IMR-90 (cell line): ENCODE measurements at regions of chr3 and their contacts with region 1.

Region 1: GRCh38 chr3:195259475-195260279 is 11.3 kb downstream of the XXYLT1 start:
- DNase-seq: peak; percentile 90
- ATAC-seq: peak; percentile 95
- H3K4me3 ChIP-seq: peak overlapping the region; percentile 58
- H3K27ac ChIP-seq: peak overlapping the region; percentile 87
- H3K4me1 ChIP-seq: peaks cover 16% of the 10 kb centered on the region
- H3K27me3 ChIP-seq: no peaks in the 10 kb centered on the region
- CTCF ChIP-seq: peak; percentile 94
- POLR2A ChIP-seq: peak; percentile 80
- RAD21 ChIP-seq: peak; percentile 85

Region 2: DNA sequence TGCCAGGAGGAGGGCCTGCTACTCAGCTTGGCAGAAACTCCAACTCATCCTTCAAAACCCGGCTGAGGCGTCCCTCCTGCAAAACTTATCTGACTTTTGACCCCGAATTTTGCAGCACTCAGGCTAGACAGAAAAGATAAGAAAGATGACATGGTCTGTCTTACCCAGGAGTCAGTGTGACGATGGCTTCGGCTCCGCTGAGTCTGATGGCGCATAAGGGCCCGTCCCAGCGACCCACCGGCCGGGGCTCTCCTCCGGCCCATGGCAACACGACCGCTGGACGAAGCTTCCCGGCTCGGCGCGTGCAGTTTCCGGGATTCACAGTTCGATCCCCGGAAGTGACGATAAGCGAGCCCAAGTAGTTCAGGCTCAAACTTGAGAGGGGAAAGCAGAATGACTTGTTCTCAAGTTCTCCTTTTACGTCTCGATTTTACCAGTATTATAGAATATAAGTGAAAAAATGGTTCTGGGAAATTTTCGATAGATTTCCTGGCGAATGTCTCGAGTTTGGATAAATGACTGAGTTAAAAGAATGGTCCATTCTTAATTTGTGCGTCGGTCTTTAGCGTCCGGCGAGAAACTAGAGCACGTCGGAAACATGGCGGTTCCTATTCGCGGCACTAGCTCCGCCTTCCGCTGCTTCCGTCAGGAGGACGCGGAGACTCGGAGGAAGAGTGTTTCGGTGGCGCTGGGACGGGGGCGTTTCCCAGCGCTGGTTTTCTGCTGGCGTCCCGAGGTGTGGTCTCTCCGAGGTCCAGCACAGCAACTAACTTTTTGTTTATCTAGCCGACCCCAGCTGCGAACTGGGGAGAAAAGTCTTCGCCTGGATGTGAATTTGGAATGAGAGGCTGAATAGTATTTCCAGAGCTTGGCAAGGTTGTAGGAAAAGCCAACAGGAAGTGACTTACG is 587.5 kb before region 1 on chr3 and contains the start of gene LSG1:
- CTCF ChIA-PET with region 1: interaction called, 3 read pairs
- POLR2A ChIA-PET with region 1: no interaction called
- dilution Hi-C with region 1: no loop called
- in situ Hi-C with region 1: no loop called
- intact Hi-C with region 1: loop called (anchors 1 kb)
- DNase-seq: peak; percentile 97
- ATAC-seq: peak; percentile 97
- H3K4me3 ChIP-seq: peak within 1 kb of the TSS; percentile 87
- H3K27ac ChIP-seq: peak within 1 kb of the TSS; percentile 86
- H3K4me1 ChIP-seq: peaks cover 1% of the 10 kb centered on the region; the same call in 1 of the 2 replicates
- H3K27me3 ChIP-seq: peaks cover 2% of the 10 kb centered on the region; the same call in 1 of the 2 replicates
- CTCF ChIP-seq: no peak
- POLR2A ChIP-seq: peak; percentile 67; the same call in 1 of the 2 replicates
- RAD21 ChIP-seq: no peak
- total RNA-seq, gene LSG1: 45.2 and 46.7 TPM in 2 replicates

Region 3: DNA sequence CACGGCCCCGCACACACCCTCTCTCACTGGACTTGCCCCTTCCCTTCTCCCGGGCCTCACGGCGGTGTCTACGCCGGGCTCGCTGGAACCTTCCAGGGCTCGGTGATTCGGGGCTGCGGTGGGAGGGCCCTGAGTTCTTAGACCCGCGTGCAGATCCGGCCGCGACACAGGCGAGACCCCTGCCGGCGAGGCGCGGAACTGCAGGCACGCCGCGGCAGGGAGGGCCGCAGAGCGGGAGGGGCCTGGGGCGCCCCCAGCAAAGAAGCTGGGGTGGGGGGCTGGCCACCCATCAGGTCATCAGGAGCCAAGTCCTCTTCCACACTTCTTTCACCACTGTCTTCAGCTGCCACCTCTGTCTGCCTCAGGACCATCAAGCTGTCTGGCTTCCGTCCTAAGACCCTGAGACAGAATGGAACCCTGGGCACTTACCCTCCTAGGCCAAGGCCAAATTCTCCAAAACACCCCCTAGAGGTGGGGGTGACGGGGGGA is 153.2 kb before region 1 on chr3:
- CTCF ChIA-PET with region 1: no interaction called
- POLR2A ChIA-PET with region 1: no interaction called
- dilution Hi-C with region 1: no loop called
- in situ Hi-C with region 1: loop called (anchors 10 kb)
- intact Hi-C with region 1: loop called (anchors 1 kb)
- DNase-seq: peak; percentile 52
- ATAC-seq: peak; percentile 91
- H3K4me3 ChIP-seq: no peak overlapping the region
- H3K27ac ChIP-seq: peak overlapping the region; percentile 29; the same call in 1 of the 2 replicates
- H3K4me1 ChIP-seq: peaks cover 10% of the 10 kb centered on the region
- H3K27me3 ChIP-seq: no peaks in the 10 kb centered on the region
- CTCF ChIP-seq: peak; percentile 89
- POLR2A ChIP-seq: no peak
- RAD21 ChIP-seq: peak; percentile 87

Region 4: DNA sequence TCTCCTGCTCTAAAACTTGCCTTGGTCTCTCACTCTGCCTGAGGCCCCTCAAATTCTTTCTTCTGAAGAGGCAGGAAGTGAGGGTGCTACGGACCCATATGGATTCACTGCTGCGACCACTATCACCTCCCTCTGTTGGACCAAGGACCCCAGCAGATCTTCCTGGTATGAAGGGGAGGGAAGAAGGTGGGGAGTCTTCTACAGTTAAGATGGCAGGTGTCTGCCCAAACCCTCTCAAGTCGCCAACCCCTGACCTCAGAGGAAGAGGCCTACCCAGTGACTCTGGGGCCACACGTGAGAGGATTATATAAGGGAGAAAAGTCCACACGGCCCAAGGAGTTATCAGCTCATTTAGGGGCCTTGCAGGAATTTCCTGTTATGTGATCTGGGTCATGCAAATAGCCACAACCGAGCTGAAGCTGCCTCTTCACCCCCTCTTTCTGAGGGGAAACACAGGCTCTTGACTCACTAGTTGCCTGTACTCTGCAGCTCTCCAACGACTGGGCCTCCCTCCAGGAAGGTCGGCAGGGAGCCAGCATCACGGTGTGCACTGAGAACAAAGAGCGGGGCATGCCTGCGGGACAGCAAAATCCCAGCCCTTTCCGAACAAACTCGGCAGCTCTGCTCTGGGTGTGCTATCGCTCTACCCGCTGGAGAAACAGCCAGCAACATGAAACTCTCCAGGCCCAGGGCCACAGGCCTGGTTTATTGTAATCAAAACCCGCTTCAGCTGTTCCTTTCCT is 104.7 kb before region 1 on chr3:
- CTCF ChIA-PET with region 1: interaction called, 3 read pairs
- POLR2A ChIA-PET with region 1: no interaction called
- dilution Hi-C with region 1: no loop called
- in situ Hi-C with region 1: no loop called
- intact Hi-C with region 1: loop called (anchors 10 kb)
- DNase-seq: peak; percentile 97
- ATAC-seq: peak; percentile 73
- H3K4me3 ChIP-seq: no peak overlapping the region
- H3K27ac ChIP-seq: peak overlapping the region; percentile 95
- H3K4me1 ChIP-seq: peaks cover 46% of the 10 kb centered on the region
- H3K27me3 ChIP-seq: no peaks in the 10 kb centered on the region
- CTCF ChIP-seq: no peak
- POLR2A ChIP-seq: no peak
- RAD21 ChIP-seq: no peak

Region 5: GRCh38 chr3:195522254-195523023 is 262.8 kb after region 1 on chr3:
- CTCF ChIA-PET with region 1: no interaction called
- POLR2A ChIA-PET with region 1: no interaction called
- dilution Hi-C with region 1: no loop called
- in situ Hi-C with region 1: no loop called
- intact Hi-C with region 1: no loop called
- DNase-seq: peak; percentile 35
- ATAC-seq: peak; percentile 59
- H3K4me3 ChIP-seq: no peak overlapping the region
- H3K27ac ChIP-seq: no peak overlapping the region
- H3K4me1 ChIP-seq: no peaks in the 10 kb centered on the region
- H3K27me3 ChIP-seq: no peaks in the 10 kb centered on the region
- CTCF ChIP-seq: peak; percentile 77
- POLR2A ChIP-seq: no peak
- RAD21 ChIP-seq: peak; percentile 73

Region 6: DNA sequence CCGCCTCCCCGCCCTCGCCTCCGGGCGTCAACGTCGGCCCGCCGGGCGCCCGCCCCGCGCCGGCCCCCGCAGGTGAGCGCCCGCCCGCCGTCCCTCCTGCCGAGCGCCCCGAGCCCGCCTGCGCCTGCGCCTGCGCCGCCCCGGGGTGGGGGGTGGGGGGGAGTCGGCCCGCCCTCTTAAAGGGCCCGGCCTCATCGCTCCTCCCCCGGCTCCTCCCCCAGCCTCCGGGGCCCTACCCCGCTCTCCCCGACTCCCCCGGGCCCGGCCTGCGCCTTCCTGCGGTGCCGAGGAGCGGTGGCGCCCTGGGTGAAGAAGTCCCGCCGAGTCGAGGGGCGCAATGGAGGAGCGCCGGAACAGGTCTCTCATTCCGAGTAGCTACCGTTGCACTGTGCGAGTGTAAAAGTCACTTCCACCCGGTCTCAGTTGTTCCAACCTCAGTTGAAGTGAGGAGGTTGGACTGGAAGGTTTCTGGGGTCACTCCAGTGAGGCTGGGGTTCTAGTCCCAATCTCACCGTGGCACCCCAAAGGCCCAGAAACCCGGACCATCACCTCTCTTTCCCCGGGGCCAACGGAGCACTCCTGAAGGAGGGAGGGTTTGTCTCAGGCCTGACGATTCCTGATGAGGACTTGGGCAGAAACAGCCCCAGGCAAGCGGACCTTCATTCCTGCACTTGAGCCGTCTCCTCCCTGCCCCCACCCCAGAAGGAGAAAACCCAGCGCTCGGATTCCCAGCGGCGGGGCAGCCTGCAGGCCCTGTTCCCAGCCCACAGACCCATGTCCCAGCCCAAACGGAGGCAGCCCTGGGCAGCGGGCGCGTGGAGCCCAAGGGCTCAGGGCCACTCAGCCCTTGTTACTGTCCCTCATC is 650.2 kb after region 1 on chr3:
- CTCF ChIA-PET with region 1: no interaction called
- POLR2A ChIA-PET with region 1: no interaction called
- dilution Hi-C with region 1: no loop called
- in situ Hi-C with region 1: no loop called
- intact Hi-C with region 1: no loop called
- DNase-seq: peak; percentile 61
- ATAC-seq: peak; percentile 91
- H3K4me3 ChIP-seq: peak overlapping the region; percentile 81
- H3K27ac ChIP-seq: peak overlapping the region; percentile 59
- H3K4me1 ChIP-seq: peaks cover 25% of the 10 kb centered on the region
- H3K27me3 ChIP-seq: no peaks in the 10 kb centered on the region
- CTCF ChIP-seq: no peak
- POLR2A ChIP-seq: no peak
- RAD21 ChIP-seq: no peak